Activated CD4-positive, alpha-beta memory T cell treated with anti-CD3 and anti-CD28 coated beads, Interleukin-2, amount 10 ng/mL, durations not matched to agents 7 days and 5 days (primary cell): ENCODE measurements at regions of chr11 and their contacts with region 1.

Region 1: DNA sequence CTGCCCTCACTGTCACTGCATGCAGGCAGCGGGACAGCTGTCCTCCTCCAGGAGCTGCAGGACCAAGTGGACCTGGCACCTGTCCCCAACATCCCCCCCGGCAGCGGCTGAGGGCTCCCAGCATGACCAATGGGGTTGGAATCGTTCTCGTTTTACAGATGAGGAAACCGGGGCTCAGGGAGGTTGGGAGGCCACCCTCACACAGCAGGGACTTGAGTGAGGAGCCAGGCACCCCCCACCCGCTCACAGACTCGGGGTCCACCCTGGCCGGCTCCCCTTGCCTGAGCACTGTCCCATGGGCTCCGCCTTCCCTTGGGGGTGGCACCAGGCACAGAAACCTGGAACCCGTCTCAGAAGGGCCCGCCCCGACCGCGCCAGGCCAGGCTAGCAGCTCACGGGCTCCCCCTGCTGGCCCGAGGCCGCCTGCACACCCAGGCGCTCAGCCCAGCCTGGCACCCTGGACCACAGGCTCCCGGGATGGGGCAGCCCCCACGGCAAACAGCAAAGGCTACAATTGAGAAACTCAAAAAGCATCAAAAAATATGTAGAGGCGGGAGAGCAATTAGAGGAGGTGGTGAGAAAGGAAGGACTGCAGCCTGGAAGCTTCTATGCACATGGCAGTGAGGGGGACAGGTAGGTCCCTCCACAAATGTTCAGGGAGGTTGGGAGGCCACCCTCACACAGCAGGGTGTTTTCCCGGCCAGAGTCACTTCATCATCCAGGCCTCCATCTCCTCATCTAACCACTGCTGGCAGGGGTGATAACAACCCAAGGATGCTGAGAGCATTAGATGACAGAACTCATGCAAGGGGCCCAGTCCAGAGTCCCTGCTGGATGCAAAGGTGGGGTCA is 12.8 kb downstream of the MACROD1 start:
- DNase-seq: peak; percentile 76
- H3K4me3 Mint-ChIP-seq: no peak overlapping the region
- H3K27ac Mint-ChIP-seq: no peak overlapping the region
- H3K4me1 Mint-ChIP-seq: no peaks in the 10 kb centered on the region
- H3K27me3 Mint-ChIP-seq: peaks cover 3% of the 10 kb centered on the region

Region 2: GRCh38 chr11:64000026-64000739 is 152.9 kb before region 1 on chr11:
- CTCF ChIA-PET with region 1: interaction called, 107 read pairs
- POLR2A ChIA-PET with region 1: interaction called, 3 read pairs
- DNase-seq: peak; percentile 79
- H3K4me3 Mint-ChIP-seq: no peak overlapping the region
- H3K27ac Mint-ChIP-seq: no peak overlapping the region
- H3K4me1 Mint-ChIP-seq: peaks cover 11% of the 10 kb centered on the region
- H3K27me3 Mint-ChIP-seq: peaks cover 2% of the 10 kb centered on the region